ENCODE measurements at regions of chr2 and their contacts with region 1.

Region 1: DNA sequence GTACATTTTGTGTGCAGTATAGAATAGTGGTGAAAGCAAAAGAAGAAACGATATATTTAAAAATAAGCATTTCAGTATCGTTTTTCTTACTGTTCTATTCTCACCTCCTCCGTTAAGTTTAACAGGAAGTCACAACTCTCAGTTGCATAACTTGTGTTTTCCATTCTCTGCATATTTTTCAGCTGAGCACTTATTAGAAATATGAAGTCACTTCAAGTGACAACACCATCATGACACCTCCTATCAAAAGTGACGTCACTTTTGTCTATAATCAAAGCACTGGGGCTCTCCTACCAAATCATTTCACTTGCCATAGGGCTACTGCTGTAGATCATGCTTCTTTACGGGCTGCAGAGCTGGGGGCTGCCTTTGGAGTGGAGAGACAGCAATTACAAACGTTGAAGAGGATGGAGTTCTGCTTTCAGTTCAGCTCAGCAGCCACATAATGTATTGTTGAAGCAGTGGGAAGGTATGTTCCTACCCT is 36.3 kb downstream of the STAT4 start:
- DNase-seq: peak in 5 of 9 experiments; percentile 25 to 85 (median 58)
- ATAC-seq: peak; percentile 65
- H3K4me3 ChIP-seq: peak overlapping the region in 1 of 2 experiments; percentile 16
- H3K4me3 Mint-ChIP-seq: peak overlapping the region; percentile 71
- H3K27ac ChIP-seq: peak overlapping the region; percentile 47 to 96
- H3K27ac Mint-ChIP-seq: peak overlapping the region; percentile 96
- H3K4me1 ChIP-seq: peaks cover 38% of the 10 kb centered on the region
- H3K4me1 Mint-ChIP-seq: peaks cover 76% of the 10 kb centered on the region
- H3K27me3 ChIP-seq: no peaks in the 10 kb centered on the region
- H3K27me3 Mint-ChIP-seq: no peaks in the 10 kb centered on the region
- CTCF ChIP-seq: no peak

Region 2: DNA sequence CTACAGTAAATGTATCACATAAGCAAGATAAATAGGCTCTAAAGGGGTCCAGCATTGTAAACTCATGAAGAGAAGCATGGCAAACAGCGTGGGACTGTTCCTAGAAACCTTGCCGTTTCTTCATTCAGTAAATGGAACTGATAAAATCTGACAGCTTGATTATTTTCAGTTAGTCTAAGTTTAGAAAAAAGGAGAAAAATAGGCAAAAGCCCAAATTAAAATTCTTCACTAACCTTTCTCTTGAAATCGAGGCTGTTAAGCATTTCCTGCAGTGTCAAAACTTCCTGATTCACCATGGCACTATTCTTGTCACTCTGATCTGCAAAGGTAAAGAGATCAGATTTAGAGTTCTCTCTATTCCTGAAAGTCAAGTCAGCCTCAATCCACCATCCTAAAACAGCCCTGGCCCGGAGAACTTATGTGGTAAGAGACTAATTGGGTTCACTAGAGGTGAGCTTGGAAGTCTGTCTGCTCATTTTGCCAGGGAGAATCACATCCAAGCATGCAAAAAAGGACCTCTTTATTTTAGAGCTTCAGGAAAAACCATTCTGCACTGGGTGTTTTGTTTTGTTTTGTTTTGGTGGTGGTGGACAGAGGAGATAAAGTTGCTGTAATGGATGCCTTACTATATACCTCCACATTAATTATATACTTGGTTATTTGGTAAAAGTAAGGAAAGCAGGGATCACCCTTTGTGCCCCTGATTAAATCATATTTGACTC is 48.1 kb before region 1 on chr2:
- CTCF ChIA-PET with region 1: interaction called, 5 read pairs
- POLR2A ChIA-PET with region 1: interaction called, 7 read pairs
- intact Hi-C with region 1: loop called (anchors 2 to 10 kb)
- DNase-seq: peak in 1 of 9 experiments; percentile 46
- ATAC-seq: no peak
- H3K4me3 ChIP-seq: peak overlapping the region in 1 of 2 experiments; percentile 48
- H3K4me3 Mint-ChIP-seq: peak overlapping the region; percentile 75
- H3K27ac ChIP-seq: peak overlapping the region; percentile 4 to 62
- H3K27ac Mint-ChIP-seq: peak overlapping the region; percentile 86
- H3K4me1 ChIP-seq: peaks cover 76% of the 10 kb centered on the region
- H3K4me1 Mint-ChIP-seq: peaks cover 84% of the 10 kb centered on the region
- H3K27me3 ChIP-seq: no peaks in the 10 kb centered on the region
- H3K27me3 Mint-ChIP-seq: no peaks in the 10 kb centered on the region
- CTCF ChIP-seq: no peak

Region 3: DNA sequence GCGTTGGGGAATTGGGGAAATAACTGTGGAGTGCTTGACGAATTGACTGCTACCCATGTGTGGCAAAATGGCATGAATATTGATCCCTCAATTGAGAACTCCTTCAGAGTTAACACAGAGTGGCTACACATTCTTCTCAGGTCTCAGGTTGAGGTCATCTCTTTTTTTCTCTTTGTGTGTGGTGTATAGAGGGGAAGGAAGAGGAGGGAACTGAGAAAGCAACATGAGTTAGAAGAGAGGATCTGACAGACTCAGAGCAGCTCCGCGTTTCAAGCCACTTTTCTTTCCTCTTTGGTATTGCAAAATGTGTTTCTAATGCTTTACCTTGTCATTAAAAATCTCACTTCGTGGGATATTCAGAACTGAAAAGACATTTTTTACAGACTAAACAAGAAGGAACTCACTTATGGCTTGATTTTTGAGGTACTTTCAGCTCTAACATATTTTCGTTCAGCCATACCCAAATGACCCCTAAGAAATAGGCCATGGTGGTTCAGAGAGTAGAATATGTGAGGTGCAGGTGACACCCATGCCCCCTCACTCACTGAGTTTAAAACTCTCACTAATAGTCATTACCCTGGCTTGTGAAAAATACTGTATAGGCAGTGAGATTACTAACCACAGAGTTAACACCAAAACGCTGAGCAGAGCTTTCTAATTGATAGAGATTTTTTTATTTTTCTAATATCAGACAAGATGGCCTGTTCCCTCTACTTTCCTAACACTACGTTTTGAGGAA is 13.9 kb after region 1 on chr2:
- CTCF ChIA-PET with region 1: interaction called, 4 read pairs
- POLR2A ChIA-PET with region 1: interaction called, 18 read pairs
- intact Hi-C with region 1: loop called in 1 of 2 experiments (anchors 1 kb)
- DNase-seq: peak in 2 of 9 experiments; percentile 68 to 79
- ATAC-seq: peak; percentile 78
- H3K4me3 ChIP-seq: peak overlapping the region; percentile 0 to 31
- H3K4me3 Mint-ChIP-seq: peak overlapping the region; percentile 60
- H3K27ac ChIP-seq: peak overlapping the region; percentile 39 to 91
- H3K27ac Mint-ChIP-seq: peak overlapping the region; percentile 62
- H3K4me1 ChIP-seq: peaks cover 38% of the 10 kb centered on the region
- H3K4me1 Mint-ChIP-seq: peaks cover 70% of the 10 kb centered on the region
- H3K27me3 ChIP-seq: no peaks in the 10 kb centered on the region
- H3K27me3 Mint-ChIP-seq: no peaks in the 10 kb centered on the region
- CTCF ChIP-seq: no peak

Region 4: GRCh38 chr2:191499874-191500565 is 385.6 kb after region 1 on chr2:
- CTCF ChIA-PET with region 1: no interaction called
- POLR2A ChIA-PET with region 1: no interaction called
- intact Hi-C with region 1: no loop called
- DNase-seq: no peak
- ATAC-seq: no peak
- H3K4me3 ChIP-seq: no peak overlapping the region
- H3K4me3 Mint-ChIP-seq: no peak overlapping the region
- H3K27ac ChIP-seq: no peak overlapping the region
- H3K27ac Mint-ChIP-seq: no peak overlapping the region
- H3K4me1 ChIP-seq: no peaks in the 10 kb centered on the region
- H3K4me1 Mint-ChIP-seq: no peaks in the 10 kb centered on the region
- H3K27me3 ChIP-seq: no peaks in the 10 kb centered on the region
- H3K27me3 Mint-ChIP-seq: no peaks in the 10 kb centered on the region
- CTCF ChIP-seq: no peak